ENCODE measurements at regions of chr2 and their contacts with region 1.

Region 1: GRCh38 chr2:113889471-113890252 is at the start of gene ACTR3:
- DNase-seq: peak; percentile 98
- ATAC-seq: peak; percentile 91
- H3K4me3 ChIP-seq: peak within 1 kb of the TSS; percentile 92 to 96 (median 95)
- H3K27ac ChIP-seq: peak within 1 kb of the TSS; percentile 94
- H3K4me1 ChIP-seq: peaks cover 62% of the 10 kb centered on the region
- H3K27me3 ChIP-seq: no peaks in the 10 kb centered on the region; a peak in 1 of 5 replicates
- CTCF ChIP-seq: peak; percentile 36; the same call in 1 of the 2 replicates
- EP300 ChIP-seq: 0 out of 4 replicates have a peak, but pooled peaks of 1 of the 2 experiments have one; percentile 40
- POLR2A ChIP-seq: peak; percentile 93 to 99
- RAD21 ChIP-seq: peak; percentile 51
- total RNA-seq, gene ACTR3: 225 and 321 TPM in 2 replicates

Region 2: GRCh38 chr2:113876503-113877387 is 12.9 kb before region 1 on chr2:
- CTCF ChIA-PET with region 1: no interaction called
- POLR2A ChIA-PET with region 1: interaction called, 79 read pairs
- in situ Hi-C with region 1: no loop called
- intact Hi-C with region 1: loop called (anchors 1 kb)
- DNase-seq: peak; percentile 98
- ATAC-seq: peak; percentile 99
- H3K4me3 ChIP-seq: peak overlapping the region; percentile 43 to 53 (median 45)
- H3K27ac ChIP-seq: peak overlapping the region; percentile 25
- H3K4me1 ChIP-seq: peaks cover 34% of the 10 kb centered on the region
- H3K27me3 ChIP-seq: no peaks in the 10 kb centered on the region
- CTCF ChIP-seq: peak; percentile 57
- EP300 ChIP-seq: peak in 1 of 2 experiments; percentile 51; a peak in 1 of 4 replicates
- POLR2A ChIP-seq: no peak
- RAD21 ChIP-seq: peak; percentile 52; the same call in 1 of the 2 replicates

Region 3: DNA sequence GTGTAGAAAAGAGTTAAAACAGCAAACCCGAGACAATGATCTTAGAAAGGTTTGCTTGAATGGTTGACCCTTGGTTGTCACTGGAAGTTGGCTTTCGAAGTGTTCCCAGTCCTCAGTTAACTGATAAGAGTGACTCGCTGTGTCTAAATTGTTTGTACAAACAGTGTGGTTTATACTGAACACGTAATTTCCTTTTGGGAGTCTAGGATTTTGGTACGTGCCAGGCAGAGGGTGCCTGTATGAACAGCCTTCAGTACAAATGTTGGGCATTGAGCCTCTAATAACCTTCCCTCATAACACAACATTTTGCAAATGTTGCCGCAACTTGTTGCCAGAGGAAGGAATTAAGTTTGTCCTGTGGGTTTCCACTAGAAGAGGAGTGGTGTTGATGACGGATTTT is 457.0 kb after region 1 on chr2:
- CTCF ChIA-PET with region 1: no interaction called
- POLR2A ChIA-PET with region 1: no interaction called
- in situ Hi-C with region 1: no loop called
- intact Hi-C with region 1: no loop called
- DNase-seq: no peak
- ATAC-seq: no peak
- H3K4me3 ChIP-seq: no peak overlapping the region
- H3K27ac ChIP-seq: no peak overlapping the region
- H3K4me1 ChIP-seq: no peaks in the 10 kb centered on the region
- H3K27me3 ChIP-seq: no peaks in the 10 kb centered on the region
- CTCF ChIP-seq: no peak
- EP300 ChIP-seq: no peak
- POLR2A ChIP-seq: no peak
- RAD21 ChIP-seq: no peak

Measured in HepG2 (cell line).